Vagina (tissue), 2 donors: ENCODE measurements at regions of chr2 and their contacts with region 1.

Region 1: DNA sequence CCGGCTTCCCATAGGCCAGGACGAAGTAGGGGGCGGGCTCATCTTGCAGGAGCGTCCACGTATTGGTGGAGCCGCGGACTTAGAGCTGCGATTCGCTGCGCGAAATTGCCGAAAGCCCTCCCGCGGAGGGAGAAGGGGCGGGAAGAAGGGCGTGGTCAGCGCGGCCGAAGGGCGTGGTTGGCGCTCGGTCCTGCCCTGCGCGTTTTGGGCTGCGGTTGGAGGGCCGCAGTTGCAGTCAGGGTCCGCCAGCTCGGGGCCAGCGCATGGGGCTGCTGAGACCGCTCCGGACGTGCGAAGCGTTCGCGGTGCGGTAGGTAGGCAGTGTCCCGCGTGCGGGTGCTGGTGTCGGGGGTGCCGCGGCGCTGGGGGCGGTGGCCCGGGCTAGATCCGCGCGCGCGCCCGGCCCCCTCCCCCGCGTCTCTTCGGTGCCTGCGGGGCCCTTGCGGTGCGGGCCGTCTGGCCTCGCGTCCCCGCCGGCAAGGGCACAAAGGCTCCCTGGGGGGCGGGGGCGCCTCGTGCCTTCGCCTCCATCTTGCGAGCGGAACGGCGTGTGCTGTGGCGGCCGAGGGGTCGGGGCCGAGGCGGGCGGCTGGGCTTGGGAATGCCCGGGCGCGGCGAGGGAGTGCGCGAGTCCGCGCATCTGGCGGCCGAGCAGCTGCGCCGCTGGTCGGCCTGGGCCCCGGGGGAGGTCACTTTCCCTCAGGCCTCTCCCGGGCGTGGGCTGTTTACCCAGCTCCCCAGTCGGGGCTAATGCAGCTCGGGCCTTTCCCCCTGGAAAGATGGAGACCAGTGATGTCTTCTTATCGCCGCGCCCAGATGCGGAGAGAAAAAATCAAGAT is at the start of gene CEP68:
- DNase-seq: peak in 1 of 2 donors; percentile 99
- H3K4me3 ChIP-seq: peak within 1 kb of the TSS; percentile 65 to 82
- H3K27ac ChIP-seq: peak within 1 kb of the TSS; percentile 94
- H3K4me1 ChIP-seq: peaks cover 53% of the 10 kb centered on the region
- H3K27me3 ChIP-seq: no peaks in the 10 kb centered on the region
- CTCF ChIP-seq: no peak
- POLR2A ChIP-seq: peak; percentile 91 to 92
- total RNA-seq, gene CEP68: 25.0 TPM

Region 2: DNA sequence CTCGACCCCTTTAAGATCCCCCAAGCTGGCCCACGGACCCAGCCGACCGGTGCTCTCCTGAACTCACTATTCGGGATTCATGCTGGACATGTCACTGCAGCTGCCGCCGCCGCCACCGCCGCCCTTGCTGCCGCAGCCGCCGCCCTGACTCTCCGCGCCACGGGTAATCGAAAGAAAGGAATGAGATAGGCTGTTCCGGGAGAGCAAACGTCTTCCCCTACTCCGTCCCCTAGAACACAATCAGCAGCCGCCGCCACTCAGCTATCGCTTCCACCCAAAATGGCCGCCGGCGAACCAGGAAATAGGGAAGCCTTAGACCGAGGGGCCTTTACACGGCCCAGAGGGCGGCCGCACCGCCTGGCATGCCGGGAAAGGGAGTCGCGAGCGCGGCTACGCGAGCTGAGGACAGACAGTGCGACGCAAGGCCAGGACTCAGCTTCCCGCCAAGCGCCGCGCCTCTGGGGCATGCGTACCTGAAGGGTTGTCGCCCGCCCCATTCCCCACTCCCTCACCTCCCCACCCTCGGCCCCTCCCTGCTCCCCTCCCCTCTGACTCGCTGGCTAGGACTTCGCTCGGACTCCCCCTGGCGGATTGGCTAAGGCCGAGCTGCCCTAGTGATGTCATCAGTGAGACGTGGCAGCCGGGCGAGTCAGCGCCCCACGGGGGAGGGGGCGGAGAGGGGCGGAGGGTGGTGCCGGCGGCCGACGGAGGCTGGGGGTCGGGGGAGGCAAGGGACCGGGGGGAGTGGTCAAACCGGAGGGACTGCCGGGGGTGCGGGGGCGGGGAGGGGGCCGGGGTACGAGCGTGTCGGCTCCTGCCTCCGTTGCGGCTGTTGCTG is 73.6 kb after region 1 on chr2 and contains the start of gene RAB1A:
- intact Hi-C with region 1: loop called (anchors 5 kb)
- DNase-seq: peak; percentile 98 to 100
- H3K4me3 ChIP-seq: peak within 1 kb of the TSS; percentile 98 to 99
- H3K27ac ChIP-seq: peak within 1 kb of the TSS; percentile 98
- H3K4me1 ChIP-seq: peaks cover 41% of the 10 kb centered on the region
- H3K27me3 ChIP-seq: no peaks in the 10 kb centered on the region
- CTCF ChIP-seq: no peak
- POLR2A ChIP-seq: peak in 1 of 2 donors; percentile 95
- total RNA-seq, gene RAB1A: 92.3 TPM

Region 3: DNA sequence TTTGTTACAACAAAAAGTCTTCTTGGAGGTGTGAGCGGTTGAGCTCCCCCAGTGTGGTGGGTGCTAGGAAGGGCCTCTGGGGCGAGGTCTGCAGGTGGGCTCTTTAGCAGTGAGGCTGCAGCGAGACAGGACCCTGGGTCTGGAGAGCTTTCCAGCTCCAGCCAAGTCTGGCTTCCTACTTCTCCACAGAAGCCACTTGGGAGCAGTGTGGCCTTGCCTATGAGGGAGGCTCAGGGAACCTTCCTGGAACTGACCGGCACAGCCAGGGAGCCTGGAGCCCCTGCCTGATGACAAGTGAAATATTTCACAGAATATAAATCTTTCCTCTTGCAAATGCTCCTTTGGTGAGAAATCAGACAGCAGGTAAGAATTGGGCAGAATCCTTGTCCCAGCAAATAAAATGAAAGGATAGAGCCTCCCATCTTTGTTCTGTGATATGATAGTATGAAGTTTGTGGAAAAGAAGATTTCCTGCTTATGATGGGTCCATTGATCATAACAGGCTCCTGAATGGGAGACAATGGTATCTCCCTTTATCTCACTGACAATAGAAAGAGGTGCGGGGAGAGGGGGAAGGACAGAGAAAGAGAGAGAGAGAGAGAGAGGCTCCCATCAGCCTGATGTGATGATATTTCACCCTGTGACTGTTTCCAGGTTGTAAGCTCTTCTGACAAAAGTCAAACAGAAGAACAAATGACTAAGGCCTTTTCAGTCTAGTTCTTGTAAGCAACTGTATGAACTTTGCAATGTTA is 665.8 kb after region 1 on chr2:
- intact Hi-C with region 1: no loop called
- DNase-seq: no peak
- H3K4me3 ChIP-seq: no peak overlapping the region
- H3K27ac ChIP-seq: no peak overlapping the region
- H3K4me1 ChIP-seq: no peaks in the 10 kb centered on the region
- H3K27me3 ChIP-seq: no peaks in the 10 kb centered on the region
- CTCF ChIP-seq: peak in 1 of 3 experiments; percentile 25
- POLR2A ChIP-seq: no peak